GM12878 (cell line): ENCODE measurements at regions of chr9 and their contacts with region 1.

Region 1: GRCh38 chr9:20462410-20462809 is 159.9 kb downstream of the MLLT3 start:
- DNase-seq: no peak
- ATAC-seq: no peak
- H3K4me3 ChIP-seq: no peak overlapping the region
- H3K27ac ChIP-seq: no peak overlapping the region
- H3K4me1 ChIP-seq: peaks cover 12% of the 10 kb centered on the region
- H3K27me3 ChIP-seq: no peaks in the 10 kb centered on the region
- CTCF ChIP-seq: peak in 1 of 3 experiments; percentile 20; a peak in 1 of 6 replicates
- EP300 ChIP-seq: no peak
- POLR2A ChIP-seq: no peak
- RAD21 ChIP-seq: no peak

Region 2: GRCh38 chr9:20426019-20426418 is 36.4 kb before region 1 on chr9:
- CTCF ChIA-PET with region 1: no interaction called
- POLR2A ChIA-PET with region 1: no interaction called
- RAD21 ChIA-PET with region 1: no interaction called
- SMC1A ChIA-PET with region 1: no interaction called
- in situ Hi-C with region 1: no loop called
- intact Hi-C with region 1: loop called (anchors 5 kb)
- DNase-seq: no peak
- ATAC-seq: peak; percentile 70
- H3K4me3 ChIP-seq: no peak overlapping the region; the same call in 1 of the 2 replicates
- H3K27ac ChIP-seq: no peak overlapping the region; the same call in 1 of the 2 replicates
- H3K4me1 ChIP-seq: peaks cover 14% of the 10 kb centered on the region; the same call in 1 of the 2 replicates
- H3K27me3 ChIP-seq: no peaks in the 10 kb centered on the region
- CTCF ChIP-seq: no peak
- EP300 ChIP-seq: no peak
- POLR2A ChIP-seq: no peak
- RAD21 ChIP-seq: no peak

Region 3: GRCh38 chr9:20479419-20480155 is 17.2 kb after region 1 on chr9:
- CTCF ChIA-PET with region 1: interaction called, 4 read pairs
- POLR2A ChIA-PET with region 1: no interaction called
- RAD21 ChIA-PET with region 1: no interaction called
- SMC1A ChIA-PET with region 1: interaction called, 13 read pairs
- in situ Hi-C with region 1: no loop called
- intact Hi-C with region 1: no loop called
- DNase-seq: peak; percentile 44
- ATAC-seq: peak; percentile 93
- H3K4me3 ChIP-seq: peak overlapping the region; percentile 42; the same call in 1 of the 2 replicates
- H3K27ac ChIP-seq: peak overlapping the region; percentile 49
- H3K4me1 ChIP-seq: peaks cover 34% of the 10 kb centered on the region
- H3K27me3 ChIP-seq: no peaks in the 10 kb centered on the region
- CTCF ChIP-seq: no peak
- EP300 ChIP-seq: no peak
- POLR2A ChIP-seq: no peak
- RAD21 ChIP-seq: no peak

Region 4: GRCh38 chr9:20722221-20722620 is 259.8 kb after region 1 on chr9:
- CTCF ChIA-PET with region 1: no interaction called
- POLR2A ChIA-PET with region 1: no interaction called
- RAD21 ChIA-PET with region 1: no interaction called
- SMC1A ChIA-PET with region 1: no interaction called
- in situ Hi-C with region 1: no loop called
- intact Hi-C with region 1: no loop called
- DNase-seq: no peak
- ATAC-seq: no peak
- H3K4me3 ChIP-seq: no peak overlapping the region
- H3K27ac ChIP-seq: no peak overlapping the region
- H3K4me1 ChIP-seq: no peaks in the 10 kb centered on the region; the same call in 1 of the 2 replicates
- H3K27me3 ChIP-seq: no peaks in the 10 kb centered on the region
- CTCF ChIP-seq: no peak
- EP300 ChIP-seq: no peak
- POLR2A ChIP-seq: no peak
- RAD21 ChIP-seq: no peak